ENCODE measurements at regions of chr6 and their contacts with region 1.

Region 1: DNA sequence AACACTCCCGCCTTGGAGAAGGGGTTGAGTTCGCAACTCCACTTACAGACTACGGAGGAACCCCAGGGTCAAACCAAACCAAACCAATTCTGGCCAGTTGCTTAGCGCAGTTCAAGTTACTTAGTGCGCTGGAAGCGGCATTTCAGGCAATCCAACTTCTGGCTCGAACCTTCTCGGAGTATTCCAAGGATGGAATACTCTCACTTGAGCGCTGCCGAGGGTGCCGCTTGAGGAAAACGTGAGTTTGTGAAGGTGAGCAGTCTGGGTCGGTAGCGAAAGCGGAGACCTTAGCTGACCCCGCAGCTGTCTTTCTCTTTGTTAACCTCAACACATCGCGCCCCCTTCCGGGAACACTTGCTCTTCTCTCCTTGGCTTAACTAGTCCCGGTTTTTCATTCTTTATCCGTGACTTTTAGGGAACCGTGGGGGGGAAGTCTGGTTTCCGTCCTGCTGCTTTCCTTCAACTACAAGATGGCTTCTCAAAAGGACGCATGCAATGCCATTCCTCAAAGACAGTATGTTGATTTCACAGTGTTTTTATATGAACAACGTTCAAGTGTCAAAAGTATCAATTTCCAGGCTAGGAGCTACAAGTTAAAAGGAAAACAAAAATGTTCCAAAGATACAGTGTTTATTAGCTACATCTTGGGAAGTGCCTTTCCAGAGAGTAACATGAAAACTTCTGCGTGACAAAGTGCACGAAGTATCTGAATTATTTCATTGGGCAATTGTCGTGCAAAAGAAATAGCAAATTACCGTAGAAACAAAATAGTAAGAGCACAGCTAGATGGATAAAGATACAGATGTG is 742 bp upstream of the PNISR start:
- DNase-seq: peak; percentile 92
- ATAC-seq: peak; percentile 86

Region 2: DNA sequence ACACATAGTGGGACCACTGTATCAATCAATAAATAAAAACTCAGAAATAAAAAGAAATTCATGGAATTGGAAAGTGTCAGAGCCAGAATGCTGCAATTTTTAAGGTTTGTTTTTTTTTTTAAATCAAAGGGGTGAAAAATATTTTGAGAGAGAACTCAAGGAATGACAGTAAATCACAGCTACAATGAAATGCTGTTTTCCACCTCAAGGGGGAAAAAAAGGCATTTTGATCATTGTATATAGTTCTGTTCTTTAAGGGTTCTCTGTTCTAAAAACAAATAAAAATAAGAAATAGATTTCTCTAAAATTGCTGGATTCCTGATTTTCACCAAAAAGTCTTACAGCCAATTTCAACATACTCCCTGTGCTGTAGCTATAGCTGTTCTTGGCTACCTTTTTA is 100.9 kb before region 1 on chr6:
- intact Hi-C with region 1: no loop called
- DNase-seq: no peak
- ATAC-seq: no peak

Region 3: GRCh38 chr6:99353126-99353525 is 72.7 kb before region 1 on chr6:
- intact Hi-C with region 1: no loop called
- DNase-seq: no peak
- ATAC-seq: no peak

Region 4: DNA sequence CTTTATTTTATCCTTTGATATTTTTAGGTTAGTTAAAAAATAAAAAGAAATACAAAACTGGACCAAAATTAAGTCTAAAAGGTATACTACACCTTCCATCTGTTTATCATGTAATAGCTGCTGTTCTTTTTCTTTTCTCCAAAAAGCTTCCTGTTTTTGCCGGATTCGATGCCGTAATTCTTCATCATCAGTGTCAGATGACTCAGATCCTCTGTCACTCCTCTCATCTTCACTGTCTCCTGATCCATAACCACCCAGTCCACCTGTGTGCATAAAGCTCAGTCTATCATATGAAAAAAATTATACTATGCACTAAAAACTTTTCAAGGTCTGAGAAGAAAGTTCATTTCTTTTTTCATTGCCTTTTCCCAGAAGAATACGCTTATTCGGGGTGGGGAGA is 23.4 kb before region 1 on chr6:
- intact Hi-C with region 1: no loop called
- DNase-seq: no peak
- ATAC-seq: no peak

Region 5: DNA sequence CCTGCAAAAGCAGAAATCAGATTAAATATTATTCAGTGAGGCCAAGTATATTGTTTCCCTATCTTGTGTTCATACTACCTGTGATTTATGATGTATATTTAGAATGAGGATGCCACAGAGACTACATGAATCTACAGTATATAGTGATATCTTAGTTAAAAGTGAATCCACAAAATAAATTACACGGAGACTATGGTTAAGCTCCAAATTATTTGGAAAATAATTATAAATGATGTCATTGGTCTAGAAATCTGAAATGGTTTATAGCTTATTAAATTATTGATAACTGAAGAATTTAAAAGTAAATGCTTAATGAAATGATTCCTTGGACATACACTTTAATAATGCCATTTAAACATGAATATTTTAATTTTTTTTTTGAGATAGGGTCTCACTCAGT is 93.6 kb after region 1 on chr6:
- intact Hi-C with region 1: loop called (anchors 5 kb)
- DNase-seq: no peak
- ATAC-seq: no peak

Measured in Right ventricle myocardium inferior (tissue), 1 donor.